K562 (cell line): ENCODE measurements at regions of chr5 and their contacts with region 1.

Region 1: DNA sequence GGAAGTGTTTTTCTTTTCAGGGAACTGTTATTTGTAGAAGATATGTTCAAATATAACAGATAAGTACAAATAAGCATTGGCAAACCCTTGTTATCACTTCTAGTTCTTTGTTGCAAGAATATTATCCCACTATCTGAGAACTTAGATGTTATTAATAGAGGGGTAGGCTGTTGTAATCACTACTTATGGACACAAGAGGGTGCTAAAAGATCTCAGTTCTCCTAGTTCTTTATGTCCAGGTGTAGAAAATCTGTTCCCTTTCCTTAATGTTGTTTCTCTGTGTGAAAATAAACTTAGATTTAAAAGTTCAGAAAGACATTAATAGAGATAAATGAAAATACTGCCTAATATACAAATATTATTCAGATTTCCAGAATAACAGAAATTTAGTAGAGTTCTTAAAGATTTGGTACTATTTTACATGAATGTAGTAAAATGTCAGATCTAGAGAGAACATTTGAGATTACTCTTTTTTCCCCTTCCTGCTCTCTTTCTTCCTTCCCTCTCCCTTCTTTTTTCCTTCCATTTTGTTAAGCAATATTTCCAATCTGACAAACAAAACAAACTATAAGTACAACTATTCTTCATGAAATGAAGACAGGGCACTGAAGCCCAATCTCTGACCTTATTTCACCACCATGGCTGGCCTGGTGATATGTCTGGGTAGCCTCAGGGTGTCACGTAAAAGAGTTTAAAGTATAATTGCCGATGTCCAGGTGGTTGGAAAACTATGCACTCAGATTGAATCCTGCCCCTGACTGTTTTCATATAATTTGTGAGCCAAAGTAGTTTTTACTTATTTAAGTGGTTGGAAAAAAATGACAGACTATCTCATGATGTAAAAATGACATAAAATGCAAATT is 43.6 kb upstream of the C5orf46 start:
- DNase-seq: peak; percentile 25 to 46 (median 42)
- ATAC-seq: peak; percentile 78
- H3K4me3 ChIP-seq: no peak overlapping the region
- H3K27ac ChIP-seq: no peak overlapping the region
- H3K4me1 ChIP-seq: no peaks in the 10 kb centered on the region
- H3K27me3 ChIP-seq: no peaks in the 10 kb centered on the region
- CTCF ChIP-seq: peak in 2 of 3 experiments; percentile 20 to 68; a peak in 4 of 6 replicates
- EP300 ChIP-seq: no peak
- POLR2A ChIP-seq: no peak
- RAD21 ChIP-seq: peak; percentile 78 to 82

Region 2: DNA sequence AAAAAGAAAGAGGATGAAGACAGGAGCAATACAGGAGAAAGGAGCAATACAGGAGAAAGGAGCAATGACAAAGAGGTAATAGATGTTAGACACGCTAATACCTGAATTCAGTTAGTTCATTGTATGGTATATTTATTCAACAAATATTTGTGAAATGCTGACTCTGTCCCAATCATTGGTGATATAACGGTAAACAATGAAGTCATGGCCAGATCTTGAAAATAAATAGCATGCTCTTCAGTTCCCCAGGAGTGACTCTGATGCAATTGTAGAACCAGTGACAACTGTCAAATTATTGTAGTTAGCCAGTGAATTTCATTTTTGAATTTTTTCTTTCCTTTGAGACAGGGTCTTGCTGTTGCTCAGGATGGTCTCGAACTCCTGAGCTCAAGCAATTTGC is 170.4 kb after region 1 on chr5:
- CTCF ChIA-PET with region 1: interaction called, 3 read pairs
- POLR2A ChIA-PET with region 1: no interaction called
- in situ Hi-C with region 1: no loop called
- intact Hi-C with region 1: loop called (anchors 5 kb)
- DNase-seq: no peak
- ATAC-seq: no peak
- H3K4me3 ChIP-seq: no peak overlapping the region
- H3K27ac ChIP-seq: no peak overlapping the region
- H3K4me1 ChIP-seq: no peaks in the 10 kb centered on the region
- H3K27me3 ChIP-seq: no peaks in the 10 kb centered on the region
- CTCF ChIP-seq: no peak
- EP300 ChIP-seq: no peak
- POLR2A ChIP-seq: no peak
- RAD21 ChIP-seq: no peak

Region 3: GRCh38 chr5:148179234-148179824 is 229.4 kb after region 1 on chr5:
- CTCF ChIA-PET with region 1: no interaction called
- POLR2A ChIA-PET with region 1: no interaction called
- in situ Hi-C with region 1: no loop called
- intact Hi-C with region 1: loop called (anchors 1 kb)
- DNase-seq: peak in 3 of 4 experiments; percentile 6 to 67 (median 6)
- ATAC-seq: peak; percentile 67; the same call in 2 of the 3 replicates
- H3K4me3 ChIP-seq: no peak overlapping the region
- H3K27ac ChIP-seq: no peak overlapping the region
- H3K4me1 ChIP-seq: no peaks in the 10 kb centered on the region
- H3K27me3 ChIP-seq: no peaks in the 10 kb centered on the region
- CTCF ChIP-seq: peak; percentile 48 to 71 (median 61); a peak in 5 of 6 replicates
- EP300 ChIP-seq: no peak
- POLR2A ChIP-seq: no peak
- RAD21 ChIP-seq: peak; percentile 89

Region 4: DNA sequence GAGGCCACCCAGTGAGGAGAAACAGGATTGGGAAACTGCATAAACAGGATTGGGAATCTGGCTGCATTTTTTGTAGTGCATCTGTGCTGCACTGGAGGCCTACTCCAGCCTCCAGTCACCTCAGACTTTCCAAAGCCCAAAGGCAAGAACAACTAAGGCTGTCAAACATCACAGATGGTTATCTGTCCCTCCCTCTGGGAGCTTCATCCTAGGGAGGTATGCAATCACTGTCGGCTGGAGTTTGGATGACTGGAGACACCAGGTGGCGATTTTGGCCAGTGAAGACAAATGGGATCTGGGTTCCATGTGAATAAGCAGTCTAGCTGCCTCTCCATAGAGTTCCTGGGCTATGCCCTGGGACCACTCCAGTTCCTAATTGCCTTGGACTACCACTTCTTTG is 309.3 kb after region 1 on chr5:
- CTCF ChIA-PET with region 1: no interaction called
- POLR2A ChIA-PET with region 1: no interaction called
- in situ Hi-C with region 1: no loop called
- intact Hi-C with region 1: no loop called
- DNase-seq: no peak
- ATAC-seq: no peak
- H3K4me3 ChIP-seq: no peak overlapping the region
- H3K27ac ChIP-seq: no peak overlapping the region
- H3K4me1 ChIP-seq: no peaks in the 10 kb centered on the region
- H3K27me3 ChIP-seq: no peaks in the 10 kb centered on the region
- CTCF ChIP-seq: no peak
- EP300 ChIP-seq: no peak
- POLR2A ChIP-seq: no peak
- RAD21 ChIP-seq: no peak

Region 5: GRCh38 chr5:148374692-148375360 is 424.9 kb after region 1 on chr5:
- CTCF ChIA-PET with region 1: no interaction called
- POLR2A ChIA-PET with region 1: no interaction called
- in situ Hi-C with region 1: no loop called
- intact Hi-C with region 1: loop called (anchors 2 kb)
- DNase-seq: peak; percentile 38 to 58 (median 46)
- ATAC-seq: peak; percentile 99
- H3K4me3 ChIP-seq: no peak overlapping the region
- H3K27ac ChIP-seq: no peak overlapping the region
- H3K4me1 ChIP-seq: no peaks in the 10 kb centered on the region
- H3K27me3 ChIP-seq: no peaks in the 10 kb centered on the region; a peak in 1 of 5 replicates
- CTCF ChIP-seq: peak; percentile 66 to 70 (median 68)
- EP300 ChIP-seq: no peak
- POLR2A ChIP-seq: no peak
- RAD21 ChIP-seq: peak; percentile 64 to 87

Region 6: DNA sequence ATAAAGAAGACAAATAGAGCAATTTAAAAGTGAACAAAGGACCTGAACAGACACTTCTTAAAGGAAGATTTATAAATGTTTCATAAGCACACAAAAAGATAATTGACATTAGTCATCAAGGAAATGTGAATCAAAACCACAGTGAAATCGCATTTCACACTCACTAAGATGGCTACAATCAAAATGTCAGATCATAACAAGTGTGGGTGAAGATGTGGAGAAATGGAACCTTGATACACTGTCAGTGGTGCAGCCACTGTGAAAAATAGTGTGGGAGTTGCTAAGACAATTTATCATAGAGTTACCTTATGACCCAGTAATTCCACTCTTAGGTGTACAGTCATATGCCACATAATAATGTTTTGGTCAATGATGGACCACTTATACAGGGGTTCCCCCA is 758.9 kb after region 1 on chr5:
- CTCF ChIA-PET with region 1: no interaction called
- POLR2A ChIA-PET with region 1: no interaction called
- in situ Hi-C with region 1: loop called (anchors 25 kb)
- intact Hi-C with region 1: no loop called
- DNase-seq: no peak
- ATAC-seq: no peak
- H3K4me3 ChIP-seq: no peak overlapping the region
- H3K27ac ChIP-seq: no peak overlapping the region
- H3K4me1 ChIP-seq: no peaks in the 10 kb centered on the region; a peak in 1 of 5 replicates
- H3K27me3 ChIP-seq: no peaks in the 10 kb centered on the region
- CTCF ChIP-seq: no peak
- EP300 ChIP-seq: no peak
- POLR2A ChIP-seq: no peak
- RAD21 ChIP-seq: no peak

Region 7: DNA sequence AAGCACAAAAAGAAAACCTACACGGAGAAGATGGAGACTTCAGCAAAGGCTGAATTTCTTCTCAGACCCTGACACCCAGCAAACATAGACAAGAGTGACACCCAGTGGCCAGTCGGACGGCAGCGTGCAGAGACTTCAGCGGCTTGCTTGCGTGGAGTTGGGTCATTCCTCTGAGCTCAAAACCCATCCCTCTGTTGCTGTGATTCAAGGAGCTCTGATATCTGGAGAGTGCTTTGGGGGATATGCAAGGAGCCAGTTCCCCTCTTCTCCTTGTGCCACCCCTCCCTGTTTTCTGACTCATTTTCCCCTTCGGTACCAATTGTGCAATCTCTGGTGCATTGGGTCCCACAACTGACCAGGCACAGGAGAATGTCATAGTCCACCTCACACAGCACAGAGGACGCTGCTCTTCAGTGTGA is 1085.4 kb after region 1 on chr5:
- CTCF ChIA-PET with region 1: no interaction called
- POLR2A ChIA-PET with region 1: no interaction called
- in situ Hi-C with region 1: no loop called
- intact Hi-C with region 1: loop called (anchors 10 kb)
- DNase-seq: peak; percentile 52 to 74 (median 56)
- ATAC-seq: peak; percentile 99
- H3K4me3 ChIP-seq: no peak overlapping the region
- H3K27ac ChIP-seq: no peak overlapping the region
- H3K4me1 ChIP-seq: no peaks in the 10 kb centered on the region; a peak in 1 of 5 replicates
- H3K27me3 ChIP-seq: peaks cover 0 to 16% of the 10 kb centered on the region in 2 experiments; a peak in 3 of 5 replicates
- CTCF ChIP-seq: peak; percentile 84 to 90 (median 90)
- EP300 ChIP-seq: no peak
- POLR2A ChIP-seq: no peak
- RAD21 ChIP-seq: peak; percentile 88 to 89